ENCODE measurements at regions of chrX and their contacts with region 1.

Region 1: GRCh38 chrX:49043220-49043986 is at the start of gene TFE3:
- DNase-seq: peak; percentile 94
- H3K4me3 Mint-ChIP-seq: peak within 1 kb of the TSS; percentile 92
- H3K27ac Mint-ChIP-seq: peak within 1 kb of the TSS; percentile 94
- H3K4me1 Mint-ChIP-seq: peaks cover 33% of the 10 kb centered on the region
- H3K27me3 Mint-ChIP-seq: no peaks in the 10 kb centered on the region
- total RNA-seq, gene TFE3: 28.4 and 28.5 TPM in 2 replicates

Region 2: DNA sequence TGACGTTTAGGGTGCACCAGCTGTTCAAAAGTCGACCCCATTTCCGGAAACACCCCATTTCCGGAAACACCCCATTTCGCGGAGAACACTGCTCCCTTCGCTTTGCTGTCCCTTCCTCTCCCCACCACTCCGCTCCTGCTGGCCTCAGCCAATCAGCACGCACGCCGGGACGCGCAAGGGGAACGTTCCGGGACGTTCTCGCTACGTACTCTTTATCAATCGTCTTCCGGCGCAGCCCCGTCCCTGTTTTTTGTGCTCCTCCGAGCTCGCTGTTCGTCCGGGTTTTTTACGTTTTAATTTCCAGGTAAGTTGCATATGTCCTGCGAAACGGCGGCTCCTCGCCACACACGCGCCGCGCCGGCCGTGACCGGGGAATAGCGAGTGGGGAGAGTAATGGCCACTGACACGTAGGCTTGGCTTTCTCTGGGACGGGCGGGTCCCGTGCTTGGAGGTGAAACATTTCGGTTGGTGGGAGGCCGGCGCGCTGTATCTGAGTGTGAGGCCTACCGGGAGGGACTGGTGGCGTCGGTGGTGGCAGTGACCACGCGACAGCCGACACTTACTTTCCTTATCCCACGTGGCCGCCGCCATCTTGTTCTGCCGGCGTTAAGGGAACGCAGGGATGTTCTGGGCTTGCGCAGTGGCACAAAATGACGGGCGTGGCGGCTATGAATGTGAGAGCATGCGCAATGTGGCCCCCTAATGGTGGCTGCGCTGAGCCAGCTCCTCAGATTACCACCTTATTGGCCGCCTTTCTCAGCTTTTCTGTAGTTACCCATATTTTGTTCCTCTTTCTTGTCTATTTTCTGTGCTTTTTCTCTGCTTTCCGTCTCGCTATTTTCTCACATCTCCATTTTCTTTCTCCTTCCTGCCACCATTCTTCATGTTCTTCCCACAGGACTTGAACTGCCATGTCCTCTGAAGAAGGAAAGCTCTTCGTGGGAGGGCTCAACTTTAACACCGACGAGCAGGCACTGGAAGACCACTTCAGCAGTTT is 468.8 kb before region 1 on chrX and contains the start of gene RBM3:
- intact Hi-C with region 1: loop called (anchors 1 kb)
- DNase-seq: peak; percentile 89
- H3K4me3 Mint-ChIP-seq: peak within 1 kb of the TSS; percentile 99
- H3K27ac Mint-ChIP-seq: peak within 1 kb of the TSS; percentile 100
- H3K4me1 Mint-ChIP-seq: peaks cover 17% of the 10 kb centered on the region
- H3K27me3 Mint-ChIP-seq: no peaks in the 10 kb centered on the region
- total RNA-seq, gene RBM3: 345 and 346 TPM in 2 replicates

Region 3: GRCh38 chrX:48897621-48898306 is 145.6 kb before region 1 on chrX and contains the starts of genes PQBP1 and TIMM17B:
- intact Hi-C with region 1: loop called (anchors 1 kb)
- DNase-seq: peak; percentile 85
- H3K4me3 Mint-ChIP-seq: peak within 1 kb of the TSS; percentile 97
- H3K27ac Mint-ChIP-seq: peak within 1 kb of the TSS; percentile 100
- H3K4me1 Mint-ChIP-seq: peaks cover 14% of the 10 kb centered on the region
- H3K27me3 Mint-ChIP-seq: no peaks in the 10 kb centered on the region
- total RNA-seq, gene PQBP1: 97.3 and 103 TPM in 2 replicates
- total RNA-seq, gene TIMM17B: 66.2 and 71.6 TPM in 2 replicates

Region 4: GRCh38 chrX:48917139-48918001 is 126.0 kb before region 1 on chrX:
- intact Hi-C with region 1: loop called (anchors 1 kb)
- DNase-seq: peak; percentile 87
- H3K4me3 Mint-ChIP-seq: peak overlapping the region; percentile 91
- H3K27ac Mint-ChIP-seq: peak overlapping the region; percentile 97
- H3K4me1 Mint-ChIP-seq: peaks cover 35% of the 10 kb centered on the region
- H3K27me3 Mint-ChIP-seq: no peaks in the 10 kb centered on the region

Region 5: GRCh38 chrX:48957827-48958634 is 85.4 kb before region 1 on chrX:
- intact Hi-C with region 1: loop called (anchors 1 kb)
- DNase-seq: peak; percentile 91
- H3K4me3 Mint-ChIP-seq: peak overlapping the region; percentile 99
- H3K27ac Mint-ChIP-seq: peak overlapping the region; percentile 100
- H3K4me1 Mint-ChIP-seq: peaks cover 34% of the 10 kb centered on the region
- H3K27me3 Mint-ChIP-seq: no peaks in the 10 kb centered on the region

Region 6: DNA sequence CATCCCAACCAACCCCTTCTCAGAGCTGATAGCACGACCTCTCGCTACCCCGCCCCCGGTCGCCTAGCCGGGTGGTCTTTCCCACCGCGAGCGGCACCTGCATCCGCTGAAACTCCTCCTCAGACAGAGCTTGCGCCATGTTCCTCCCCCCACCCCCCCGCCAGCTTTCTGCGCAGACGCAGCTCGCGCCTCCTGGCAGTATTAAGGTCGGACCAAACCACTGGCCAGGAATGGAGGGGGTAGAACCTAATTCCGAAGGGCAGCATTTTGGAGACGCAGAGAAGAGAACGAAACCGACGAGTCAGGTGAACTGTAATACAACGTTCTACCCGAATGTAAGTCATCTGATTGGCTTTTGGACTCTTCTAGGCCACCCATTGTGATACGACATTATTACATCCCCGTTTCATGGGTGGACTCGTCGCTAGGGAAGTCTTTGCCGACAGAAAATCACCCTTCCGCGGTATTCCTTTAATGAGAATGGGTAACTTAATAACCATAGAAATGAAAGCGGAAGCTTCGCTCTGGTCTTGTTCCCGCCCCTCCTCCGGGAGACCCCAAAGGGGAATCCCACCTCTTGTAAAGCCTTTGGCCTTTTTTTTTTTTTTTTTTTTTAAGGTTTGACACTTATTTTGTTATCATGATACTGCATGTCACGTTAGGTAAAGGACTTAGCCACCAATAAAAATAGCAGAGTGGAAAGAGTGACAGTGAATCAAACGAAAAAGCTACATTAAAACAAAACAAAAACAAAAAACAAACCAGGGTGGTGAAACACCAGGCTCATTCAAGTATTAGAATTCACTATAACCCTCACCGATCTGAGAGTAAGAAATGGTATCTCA is 41.1 kb before region 1 on chrX and contains the start of gene GRIPAP1:
- intact Hi-C with region 1: loop called (anchors 1 kb)
- DNase-seq: peak; percentile 70
- H3K4me3 Mint-ChIP-seq: peak within 1 kb of the TSS; percentile 96
- H3K27ac Mint-ChIP-seq: peak within 1 kb of the TSS; percentile 96
- H3K4me1 Mint-ChIP-seq: peaks cover 31% of the 10 kb centered on the region
- H3K27me3 Mint-ChIP-seq: no peaks in the 10 kb centered on the region
- total RNA-seq, gene GRIPAP1: 86.5 and 93.1 TPM in 2 replicates

Region 7: GRCh38 chrX:49155900-49156837 is 112.8 kb after region 1 on chrX:
- intact Hi-C with region 1: loop called (anchors 1 kb)
- DNase-seq: peak; percentile 82
- H3K4me3 Mint-ChIP-seq: peak overlapping the region; percentile 83
- H3K27ac Mint-ChIP-seq: peak overlapping the region; percentile 92
- H3K4me1 Mint-ChIP-seq: peaks cover 11% of the 10 kb centered on the region
- H3K27me3 Mint-ChIP-seq: no peaks in the 10 kb centered on the region

Region 8: GRCh38 chrX:49177338-49177833 is 134.0 kb after region 1 on chrX:
- intact Hi-C with region 1: no loop called
- DNase-seq: no peak
- H3K4me3 Mint-ChIP-seq: no peak overlapping the region
- H3K27ac Mint-ChIP-seq: no peak overlapping the region
- H3K4me1 Mint-ChIP-seq: peaks cover 13% of the 10 kb centered on the region
- H3K27me3 Mint-ChIP-seq: no peaks in the 10 kb centered on the region